HepG2 (cell line): ENCODE measurements at regions of chr16 and their contacts with region 1.

Region 1: GRCh38 chr16:20383106-20384029 is 21.2 kb downstream of the PDILT start:
- DNase-seq: peak; percentile 84
- ATAC-seq: peak; percentile 85
- H3K4me3 ChIP-seq: no peak overlapping the region
- H3K27ac ChIP-seq: no peak overlapping the region
- H3K4me1 ChIP-seq: peaks cover 21% of the 10 kb centered on the region
- H3K27me3 ChIP-seq: no peaks in the 10 kb centered on the region
- CTCF ChIP-seq: peak; percentile 93
- EP300 ChIP-seq: no peak
- POLR2A ChIP-seq: no peak
- RAD21 ChIP-seq: peak; percentile 95

Region 2: DNA sequence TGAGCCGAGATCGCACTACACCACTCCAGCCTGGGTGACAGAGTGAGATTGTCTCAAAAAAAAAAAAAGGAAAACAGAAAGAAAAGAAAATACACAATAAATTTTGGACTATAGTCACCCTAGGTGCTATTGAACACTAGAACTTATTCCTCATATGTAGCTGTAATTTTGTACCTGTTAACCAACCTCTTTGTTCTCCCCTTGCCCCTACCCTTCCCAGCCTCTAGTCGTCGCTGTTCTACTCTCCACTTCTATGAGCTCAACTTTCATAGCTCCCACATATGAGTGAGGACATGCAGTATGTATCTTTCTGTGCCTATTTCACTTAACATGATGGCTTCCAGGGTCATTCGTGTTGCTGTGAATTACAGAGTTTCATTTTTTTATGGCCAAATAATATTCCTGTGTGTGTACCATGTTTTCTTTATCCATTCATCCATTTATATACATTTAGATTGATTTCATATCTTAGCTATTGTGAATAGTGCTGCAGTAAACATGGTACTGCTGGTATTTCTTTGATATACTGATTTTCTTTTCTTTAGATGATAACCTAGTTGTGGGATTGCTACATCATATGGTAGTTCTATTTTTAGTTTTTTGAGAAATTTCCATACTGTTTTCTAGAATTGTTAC is 799.6 kb before region 1 on chr16:
- CTCF ChIA-PET with region 1: no interaction called
- POLR2A ChIA-PET with region 1: no interaction called
- in situ Hi-C with region 1: loop called (anchors 25 kb)
- intact Hi-C with region 1: no loop called
- DNase-seq: peak; percentile 77
- ATAC-seq: peak; percentile 98
- H3K4me3 ChIP-seq: no peak overlapping the region
- H3K27ac ChIP-seq: no peak overlapping the region
- H3K4me1 ChIP-seq: 0 out of 2 replicates have a peak, but pooled peaks cover 6% of the 10 kb centered on the region
- H3K27me3 ChIP-seq: no peaks in the 10 kb centered on the region
- CTCF ChIP-seq: peak; percentile 90
- EP300 ChIP-seq: no peak
- POLR2A ChIP-seq: no peak
- RAD21 ChIP-seq: no peak

Region 3: GRCh38 chr16:19898924-19899604 is 484.3 kb before region 1 on chr16:
- CTCF ChIA-PET with region 1: interaction called, 12 read pairs
- POLR2A ChIA-PET with region 1: no interaction called
- in situ Hi-C with region 1: loop called (anchors 5 kb)
- intact Hi-C with region 1: loop called (anchors 2 kb)
- DNase-seq: peak; percentile 66
- ATAC-seq: peak; percentile 80
- H3K4me3 ChIP-seq: no peak overlapping the region
- H3K27ac ChIP-seq: no peak overlapping the region
- H3K4me1 ChIP-seq: no peaks in the 10 kb centered on the region
- H3K27me3 ChIP-seq: peaks cover 0 to 6% of the 10 kb centered on the region in 2 experiments; a peak in 3 of 5 replicates
- CTCF ChIP-seq: peak; percentile 86
- EP300 ChIP-seq: no peak
- POLR2A ChIP-seq: no peak
- RAD21 ChIP-seq: peak; percentile 90

Region 4: GRCh38 chr16:19907161-19907992 is 476.0 kb before region 1 on chr16:
- CTCF ChIA-PET with region 1: interaction called, 26 read pairs
- POLR2A ChIA-PET with region 1: interaction called, 4 read pairs
- in situ Hi-C with region 1: no loop called
- intact Hi-C with region 1: loop called (anchors 1 kb)
- DNase-seq: peak; percentile 67
- ATAC-seq: peak; percentile 97
- H3K4me3 ChIP-seq: no peak overlapping the region
- H3K27ac ChIP-seq: no peak overlapping the region
- H3K4me1 ChIP-seq: no peaks in the 10 kb centered on the region
- H3K27me3 ChIP-seq: peaks cover 3 to 30% of the 10 kb centered on the region in 2 experiments; a peak in 4 of 5 replicates
- CTCF ChIP-seq: peak; percentile 99
- EP300 ChIP-seq: no peak
- POLR2A ChIP-seq: no peak
- RAD21 ChIP-seq: peak; percentile 99

Region 5: GRCh38 chr16:20300312-20301097 is 82.9 kb before region 1 on chr16:
- CTCF ChIA-PET with region 1: interaction called, 3 read pairs
- POLR2A ChIA-PET with region 1: no interaction called
- in situ Hi-C with region 1: no loop called
- intact Hi-C with region 1: loop called (anchors 2 kb)
- DNase-seq: peak; percentile 71
- ATAC-seq: peak; percentile 98
- H3K4me3 ChIP-seq: no peak overlapping the region
- H3K27ac ChIP-seq: no peak overlapping the region
- H3K4me1 ChIP-seq: no peaks in the 10 kb centered on the region
- H3K27me3 ChIP-seq: no peaks in the 10 kb centered on the region
- CTCF ChIP-seq: peak; percentile 97
- EP300 ChIP-seq: no peak
- POLR2A ChIP-seq: no peak
- RAD21 ChIP-seq: peak; percentile 94

Region 6: GRCh38 chr16:20359997-20360396 is 23.4 kb before region 1 on chr16:
- CTCF ChIA-PET with region 1: interaction called, 11 read pairs
- POLR2A ChIA-PET with region 1: no interaction called
- in situ Hi-C with region 1: no loop called
- intact Hi-C with region 1: loop called (anchors 1 kb)
- DNase-seq: peak; percentile 39
- ATAC-seq: peak; percentile 78
- H3K4me3 ChIP-seq: no peak overlapping the region
- H3K27ac ChIP-seq: no peak overlapping the region
- H3K4me1 ChIP-seq: peaks cover 6% of the 10 kb centered on the region
- H3K27me3 ChIP-seq: peaks cover 0 to 24% of the 10 kb centered on the region in 2 experiments; a peak in 2 of 5 replicates
- CTCF ChIP-seq: peak; percentile 76
- EP300 ChIP-seq: no peak
- POLR2A ChIP-seq: no peak
- RAD21 ChIP-seq: peak; percentile 57

Region 7: DNA sequence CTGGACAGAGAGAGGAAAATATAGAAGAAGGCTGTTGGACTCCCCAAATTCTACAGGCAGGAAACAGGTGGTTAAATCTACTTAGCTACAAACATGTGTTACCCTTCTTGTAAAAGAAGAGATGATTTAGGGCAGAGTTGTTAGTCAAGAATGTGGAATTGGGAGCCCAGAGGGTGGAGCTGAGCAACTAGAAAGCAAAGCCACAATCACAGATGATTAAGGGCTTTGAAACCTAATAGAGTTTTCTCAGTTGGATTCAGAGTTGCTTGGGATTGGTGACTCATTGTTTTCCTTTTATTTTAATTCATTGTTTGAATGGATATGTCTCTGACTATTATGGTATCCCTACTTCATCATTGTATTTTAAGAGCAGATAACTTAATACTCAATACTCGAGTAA is 32.2 kb after region 1 on chr16:
- CTCF ChIA-PET with region 1: no interaction called
- POLR2A ChIA-PET with region 1: no interaction called
- in situ Hi-C with region 1: no loop called
- intact Hi-C with region 1: no loop called
- DNase-seq: no peak
- ATAC-seq: no peak
- H3K4me3 ChIP-seq: no peak overlapping the region
- H3K27ac ChIP-seq: no peak overlapping the region
- H3K4me1 ChIP-seq: peaks cover 9% of the 10 kb centered on the region
- H3K27me3 ChIP-seq: no peaks in the 10 kb centered on the region
- CTCF ChIP-seq: no peak
- EP300 ChIP-seq: no peak
- POLR2A ChIP-seq: no peak
- RAD21 ChIP-seq: no peak

Region 8: DNA sequence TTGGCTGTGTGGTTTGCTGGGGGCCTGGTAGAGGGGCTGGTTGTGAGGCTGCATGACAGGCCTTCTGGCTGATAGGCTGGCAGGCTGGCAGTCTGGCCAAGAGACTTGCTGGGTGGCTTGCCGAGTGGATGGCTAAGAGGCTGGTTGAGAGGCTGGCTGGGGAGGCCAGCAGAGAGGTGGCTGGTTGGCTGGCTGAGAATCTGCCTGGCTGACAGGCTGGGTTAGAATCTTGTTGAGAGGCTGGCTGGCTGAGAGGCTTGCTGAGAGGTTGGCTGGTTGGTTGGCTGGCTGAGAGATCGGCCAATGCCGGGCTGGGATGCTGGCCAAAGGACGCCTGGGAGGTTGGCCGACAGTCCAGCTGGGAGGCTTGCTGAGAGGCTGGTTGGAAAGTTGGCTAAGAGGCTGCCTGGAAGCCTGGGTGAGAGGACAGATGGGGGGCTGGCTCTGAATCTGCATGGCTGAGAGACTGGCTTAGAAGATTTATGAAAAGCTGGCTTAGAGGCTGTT is 228.7 kb after region 1 on chr16:
- CTCF ChIA-PET with region 1: no interaction called
- POLR2A ChIA-PET with region 1: no interaction called
- in situ Hi-C with region 1: no loop called
- intact Hi-C with region 1: loop called (anchors 5 kb)
- DNase-seq: no peak
- ATAC-seq: peak; percentile 23
- H3K4me3 ChIP-seq: peak overlapping the region in 1 of 3 experiments; percentile 47; a peak in 1 of 6 replicates
- H3K27ac ChIP-seq: no peak overlapping the region
- H3K4me1 ChIP-seq: peaks cover 60% of the 10 kb centered on the region
- H3K27me3 ChIP-seq: peaks cover 0 to 14% of the 10 kb centered on the region in 2 experiments; a peak in 3 of 5 replicates
- CTCF ChIP-seq: no peak
- EP300 ChIP-seq: no peak
- POLR2A ChIP-seq: no peak
- RAD21 ChIP-seq: no peak